Dorsolateral prefrontal cortex (tissue), 120 donors: ENCODE measurements at regions of chr12 and their contacts with region 1.

Region 1: GRCh38 chr12:25130741-25131188 is 64.2 kb downstream of the DNAI7 start:
- DNase-seq: no peak
- H3K4me3 ChIP-seq: no peak overlapping the region
- H3K27ac ChIP-seq: no peak overlapping the region
- H3K27me3 ChIP-seq: no peaks in the 10 kb centered on the region
- CTCF ChIP-seq: peak; percentile 60 to 90 (median 75)

Region 2: GRCh38 chr12:24991209-24992049 is 139.3 kb before region 1 on chr12:
- intact Hi-C with region 1: loop called (anchors 5 kb)
- DNase-seq: no peak
- H3K4me3 ChIP-seq: no peak overlapping the region
- H3K27ac ChIP-seq: no peak overlapping the region
- H3K27me3 ChIP-seq: peaks cover 0 to 4% (median 0%) of the 10 kb centered on the region in 45 donors
- CTCF ChIP-seq: peak; percentile 59 to 94 (median 76)